ENCODE measurements at regions of chr3 and their contacts with region 1.

Region 1: GRCh38 chr3:56753206-56753820 is 48.4 kb downstream of the ARHGEF3 start:
- DNase-seq: peak in 1 of 10 donors; percentile 15
- ATAC-seq: peak in 1 of 2 donors; percentile 67
- H3K4me3 Mint-ChIP-seq: peak overlapping the region in 9 of 10 donors; percentile 8 to 96 (median 88)
- H3K27ac Mint-ChIP-seq: peak overlapping the region; percentile 78 to 99 (median 97)
- H3K4me1 Mint-ChIP-seq: peaks cover 32 to 82% (median 69%) of the 10 kb centered on the region in 4 donors
- H3K27me3 Mint-ChIP-seq: no peaks in the 10 kb centered on the region

Region 2: DNA sequence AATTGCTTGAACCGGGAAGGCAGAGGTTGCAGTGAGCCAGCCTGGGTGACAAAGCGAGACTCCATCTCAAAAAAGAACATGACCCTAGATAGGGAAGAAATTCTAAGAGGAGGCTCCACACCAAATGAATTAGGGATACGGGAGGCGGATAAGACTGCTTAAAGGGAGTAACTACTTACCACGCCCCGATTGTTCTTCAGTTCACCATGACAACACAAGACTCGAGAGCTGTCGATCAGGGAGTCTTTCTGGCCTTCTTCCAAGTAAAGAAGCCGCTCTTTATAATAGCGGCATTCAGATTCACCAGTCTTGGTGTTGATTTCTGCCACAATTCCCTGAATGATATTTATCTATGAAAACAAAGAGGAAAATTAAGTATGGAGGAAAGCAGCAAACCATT is 16.3 kb before region 1 on chr3:
- POLR2A ChIA-PET with region 1: interaction called, 13 read pairs
- DNase-seq: no peak
- ATAC-seq: no peak
- H3K4me3 Mint-ChIP-seq: peak overlapping the region in 1 of 10 donors; percentile 41
- H3K27ac Mint-ChIP-seq: peak overlapping the region in 9 of 10 donors; percentile 14 to 94 (median 68)
- H3K4me1 Mint-ChIP-seq: peaks cover 26 to 54% (median 41%) of the 10 kb centered on the region in 4 donors
- H3K27me3 Mint-ChIP-seq: no peaks in the 10 kb centered on the region